ENCODE measurements at regions of chr13 and their contacts with region 1.

Region 1: DNA sequence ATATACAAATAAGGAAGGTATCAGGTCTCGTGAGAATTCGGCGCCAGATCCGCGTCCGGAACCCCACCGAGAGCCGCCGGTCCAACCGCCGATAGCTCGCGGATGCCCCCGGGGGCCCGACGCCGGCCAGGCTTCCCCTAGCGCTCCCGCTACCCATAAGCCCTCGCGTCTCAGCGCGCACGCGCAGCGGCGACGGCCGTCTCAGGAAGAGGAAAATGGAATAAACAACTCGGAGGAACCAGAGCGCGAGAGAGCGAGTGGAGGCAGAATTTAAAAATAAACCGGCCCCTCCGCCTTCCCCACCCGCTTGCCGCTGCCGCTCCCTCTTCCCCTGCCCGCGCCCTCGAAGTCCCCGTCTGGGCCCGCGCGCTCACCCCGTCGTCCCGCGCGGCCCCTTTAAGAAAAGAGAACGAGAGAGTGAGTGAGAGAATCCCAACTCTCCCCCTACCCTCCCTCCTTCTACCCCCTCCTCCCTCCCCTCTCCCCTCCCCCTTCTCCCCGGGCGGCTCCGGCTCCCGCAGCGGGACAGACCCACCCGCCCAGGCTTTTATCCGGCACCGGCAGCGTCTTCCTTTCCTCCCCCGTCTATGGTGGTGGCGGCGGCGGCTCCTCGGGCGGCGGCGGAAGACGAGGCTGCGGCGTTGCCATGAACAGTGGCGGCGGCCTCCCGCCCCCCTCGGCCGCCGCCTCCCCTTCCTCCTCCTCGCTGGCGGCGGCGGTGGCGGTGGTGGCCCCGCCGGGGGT is at the start of gene PAN3:
- DNase-seq: peak; percentile 85 to 95 (median 88)
- ATAC-seq: peak; percentile 60 to 65 (median 62)
- H3K4me3 ChIP-seq: peak within 1 kb of the TSS; percentile 67 to 84
- H3K4me3 Mint-ChIP-seq: peak within 1 kb of the TSS; percentile 86 to 96 (median 94)
- H3K27ac ChIP-seq: peak within 1 kb of the TSS; percentile 92
- H3K27ac Mint-ChIP-seq: peak within 1 kb of the TSS; percentile 97 to 98
- H3K4me1 ChIP-seq: peaks cover 28 to 39% of the 10 kb centered on the region in 2 experiments
- H3K4me1 Mint-ChIP-seq: peaks cover 48 to 55% (median 49%) of the 10 kb centered on the region in 3 donors
- H3K27me3 ChIP-seq: no peaks in the 10 kb centered on the region
- H3K27me3 Mint-ChIP-seq: no peaks in the 10 kb centered on the region
- total RNA-seq, gene PAN3: 62.9 to 79.6 (median 69.3) TPM

Region 2: DNA sequence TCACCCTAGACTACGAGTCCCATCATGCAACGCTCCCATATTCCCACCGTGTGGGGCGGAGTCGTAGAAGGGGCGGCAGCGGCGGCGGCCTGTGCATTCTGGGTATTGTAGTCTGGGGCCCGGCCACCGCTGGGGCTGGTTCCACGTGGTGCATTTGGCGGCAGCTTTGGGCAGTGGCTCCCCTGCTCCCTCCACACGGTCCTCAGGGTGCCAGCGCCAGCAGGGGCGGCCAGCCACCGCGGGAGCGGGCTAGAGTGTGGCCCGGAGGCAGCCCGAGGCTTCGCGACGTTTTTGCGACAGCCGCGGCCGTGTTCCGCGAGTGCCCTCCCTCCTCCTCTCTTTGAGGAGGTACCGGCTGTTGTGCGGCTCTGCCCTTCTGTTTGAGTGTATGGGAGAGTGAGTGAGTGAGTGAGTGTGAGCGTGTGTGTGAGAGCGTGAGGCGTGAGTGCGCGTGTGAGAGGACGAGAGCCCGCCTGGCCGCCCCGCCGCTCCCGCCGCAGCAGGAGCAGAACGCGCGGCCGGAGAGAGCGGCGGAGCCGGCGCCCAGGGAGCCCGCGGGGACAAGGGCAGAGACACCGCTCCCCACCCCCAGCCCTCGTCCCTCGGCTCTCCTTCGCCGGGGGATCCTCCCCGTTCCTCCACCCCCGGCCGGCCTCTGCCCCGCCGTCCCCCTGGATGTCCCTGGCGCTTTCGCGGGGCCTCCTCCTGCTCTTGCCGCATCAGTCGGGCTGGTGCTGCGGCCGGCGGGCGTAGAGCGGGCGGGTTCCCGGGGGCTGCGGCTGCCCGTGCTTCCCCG is 1884.2 kb before region 1 on chr13 and contains the start of gene CDK8:
- CTCF ChIA-PET with region 1: no interaction called
- POLR2A ChIA-PET with region 1: interaction called in 1 of 2 experiments, 10 read pairs
- DNase-seq: peak; percentile 74 to 93 (median 86)
- ATAC-seq: peak; percentile 87 to 91 (median 88)
- H3K4me3 ChIP-seq: peak within 1 kb of the TSS; percentile 88 to 90
- H3K4me3 Mint-ChIP-seq: peak within 1 kb of the TSS; percentile 82 to 97 (median 89)
- H3K27ac ChIP-seq: peak within 1 kb of the TSS; percentile 76
- H3K27ac Mint-ChIP-seq: peak within 1 kb of the TSS; percentile 65 to 84
- H3K4me1 ChIP-seq: peaks cover 10 to 20% of the 10 kb centered on the region in 2 experiments
- H3K4me1 Mint-ChIP-seq: peaks cover 37 to 50% (median 40%) of the 10 kb centered on the region in 3 donors
- H3K27me3 ChIP-seq: no peaks in the 10 kb centered on the region
- H3K27me3 Mint-ChIP-seq: peaks cover 0 to 2% of the 10 kb centered on the region in 2 donors
- total RNA-seq, gene CDK8: 9.2 to 13.5 (median 12.1) TPM

Region 3: DNA sequence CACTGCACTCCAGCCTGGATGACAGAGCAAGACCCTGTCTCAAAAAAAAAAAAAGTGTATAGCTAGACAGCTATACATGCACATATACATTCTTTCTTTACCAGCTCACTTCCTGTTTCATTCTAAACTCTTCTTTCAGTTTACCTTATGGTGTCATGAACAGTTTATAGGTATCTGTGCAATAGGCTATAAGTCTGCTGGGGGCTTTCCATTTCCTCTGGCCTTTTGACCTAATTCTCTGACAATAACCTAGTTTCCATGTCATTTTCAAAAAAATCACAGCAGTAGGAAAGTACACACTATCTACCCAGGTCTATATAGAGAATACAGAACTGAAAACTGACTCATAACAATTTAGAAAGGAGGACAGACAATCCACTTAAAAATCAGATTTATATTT is 125.3 kb before region 1 on chr13:
- CTCF ChIA-PET with region 1: no interaction called
- POLR2A ChIA-PET with region 1: no interaction called
- DNase-seq: no peak
- ATAC-seq: no peak
- H3K4me3 ChIP-seq: no peak overlapping the region
- H3K4me3 Mint-ChIP-seq: no peak overlapping the region
- H3K27ac ChIP-seq: no peak overlapping the region
- H3K27ac Mint-ChIP-seq: no peak overlapping the region
- H3K4me1 ChIP-seq: no peaks in the 10 kb centered on the region
- H3K4me1 Mint-ChIP-seq: peaks cover 0 to 2% (median 0%) of the 10 kb centered on the region in 3 donors
- H3K27me3 ChIP-seq: peaks cover 0 to 9% of the 10 kb centered on the region in 2 experiments
- H3K27me3 Mint-ChIP-seq: peaks cover 8 to 10% of the 10 kb centered on the region in 2 donors

Region 4: DNA sequence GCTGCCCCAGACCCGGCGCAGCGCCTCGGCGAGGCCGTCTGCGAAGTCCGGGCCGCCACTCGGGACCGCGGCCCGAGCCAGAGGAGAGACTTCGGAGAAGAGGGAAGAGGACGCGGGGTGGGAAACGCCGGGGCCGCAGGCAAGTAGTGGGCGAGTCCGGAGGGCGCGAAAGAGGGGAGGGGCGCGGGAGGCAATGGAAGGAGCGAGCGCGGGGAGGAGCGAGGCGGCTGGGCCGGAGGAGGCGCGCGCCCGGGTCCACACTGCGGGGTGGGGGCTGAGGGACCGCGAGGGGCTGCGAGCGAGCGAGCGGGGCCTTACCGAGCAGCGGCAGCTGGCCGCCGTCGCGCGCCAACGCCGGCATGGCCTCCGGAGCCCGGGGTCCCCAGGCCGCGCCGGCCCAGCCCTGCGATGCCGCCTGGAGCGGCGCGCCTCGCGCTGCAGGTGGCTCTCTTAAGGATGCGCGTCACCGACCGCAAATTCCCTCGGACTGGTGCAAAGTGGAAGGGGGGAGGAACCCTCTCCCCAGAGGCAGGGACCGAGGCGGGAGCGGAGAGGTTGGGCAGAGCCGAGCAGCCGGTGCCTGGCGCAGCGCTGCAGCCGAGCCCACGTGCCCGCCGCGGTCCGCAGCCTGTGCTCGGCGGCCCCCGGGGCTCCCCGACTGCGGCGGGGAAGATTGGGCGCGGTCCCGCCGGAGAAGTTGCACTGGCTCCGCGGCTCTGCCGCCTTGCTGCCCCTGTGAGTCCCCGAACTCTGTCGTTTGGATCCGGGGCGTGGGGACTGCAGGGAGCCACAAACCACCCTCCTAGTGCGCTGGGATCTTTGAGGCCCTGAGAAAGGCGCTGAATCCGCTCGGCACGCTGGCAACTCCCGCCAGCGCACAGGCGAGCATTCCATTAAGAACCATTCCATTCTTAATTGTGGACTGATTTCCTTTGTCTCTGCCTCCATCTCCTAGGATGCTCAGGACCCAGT is 37.7 kb before region 1 on chr13 and contains the start of gene FLT3:
- CTCF ChIA-PET with region 1: no interaction called
- POLR2A ChIA-PET with region 1: interaction called in 1 of 2 experiments, 11 read pairs
- DNase-seq: peak in 19 of 35 experiments; percentile 0 to 40 (median 4)
- ATAC-seq: peak; percentile 63 to 72 (median 67)
- H3K4me3 ChIP-seq: peak within 1 kb of the TSS in 1 of 2 donors; percentile 76
- H3K4me3 Mint-ChIP-seq: peak within 1 kb of the TSS; percentile 65 to 79 (median 67)
- H3K27ac ChIP-seq: no peak within 1 kb of the TSS
- H3K27ac Mint-ChIP-seq: no peak within 1 kb of the TSS
- H3K4me1 ChIP-seq: peaks cover 0 to 14% of the 10 kb centered on the region in 2 experiments
- H3K4me1 Mint-ChIP-seq: peaks cover 5 to 10% (median 9%) of the 10 kb centered on the region in 3 donors
- H3K27me3 ChIP-seq: peaks cover 0 to 41% of the 10 kb centered on the region in 2 experiments
- H3K27me3 Mint-ChIP-seq: peaks cover 35 to 66% of the 10 kb centered on the region in 2 donors
- total RNA-seq, gene FLT3: 0.13 to 0.48 (median 0.26) TPM

Measured in T-cell (primary cell).